ENCODE measurements at regions of chr11 and their contacts with region 1.

Region 1: DNA sequence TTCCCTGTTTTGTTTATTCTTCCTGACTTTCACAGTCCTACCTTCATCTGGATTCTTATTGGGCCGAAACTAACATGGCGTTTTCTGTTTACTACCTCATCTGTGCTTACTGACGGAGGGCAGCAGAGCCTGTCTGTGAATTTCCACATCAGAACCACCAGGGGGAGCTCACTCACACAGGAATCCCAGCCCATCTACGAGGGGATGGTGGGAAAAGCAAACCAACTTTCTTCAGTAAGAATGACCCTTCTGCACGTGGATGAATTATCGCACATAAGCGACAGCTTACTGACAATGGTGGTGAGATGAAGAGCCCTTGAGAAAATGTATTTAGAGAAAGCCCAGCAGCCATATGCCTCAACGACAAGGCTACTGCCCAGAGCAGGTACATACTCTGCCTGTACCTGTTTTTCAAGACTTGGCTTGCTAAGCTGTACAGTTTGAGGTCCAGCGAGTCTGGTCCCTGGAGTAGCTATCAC is 42.5 kb downstream of the LARGE2 start:
- DNase-seq: peak; percentile 73
- ATAC-seq: peak; percentile 95
- H3K4me3 Mint-ChIP-seq: no peak overlapping the region
- H3K27ac Mint-ChIP-seq: no peak overlapping the region
- H3K4me1 Mint-ChIP-seq: no peaks in the 10 kb centered on the region
- H3K27me3 Mint-ChIP-seq: no peaks in the 10 kb centered on the region

Region 2: DNA sequence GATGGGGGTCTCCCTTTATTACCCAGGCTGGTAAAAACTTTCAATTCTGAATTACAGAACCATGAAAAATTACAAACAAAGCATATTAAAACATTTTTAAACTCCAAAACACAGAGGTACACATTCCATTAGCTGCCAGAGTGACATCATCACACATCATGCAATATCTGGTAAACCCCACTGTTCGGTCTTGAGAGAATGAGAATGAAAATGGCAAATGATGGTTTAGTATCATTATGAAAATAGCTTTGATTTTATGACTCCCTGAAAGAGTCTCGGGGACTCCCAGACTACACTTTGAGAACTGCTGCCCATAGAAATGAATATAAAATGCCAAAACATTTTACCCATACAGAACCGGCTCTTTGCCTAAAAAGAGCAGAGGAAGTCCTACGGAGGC is 23.7 kb before region 1 on chr11:
- CTCF ChIA-PET with region 1: interaction called, 14 read pairs
- POLR2A ChIA-PET with region 1: no interaction called
- intact Hi-C with region 1: no loop called
- DNase-seq: no peak
- ATAC-seq: peak; percentile 85
- H3K4me3 Mint-ChIP-seq: no peak overlapping the region
- H3K27ac Mint-ChIP-seq: peak overlapping the region; percentile 63
- H3K4me1 Mint-ChIP-seq: peaks cover 2% of the 10 kb centered on the region
- H3K27me3 Mint-ChIP-seq: no peaks in the 10 kb centered on the region

Region 3: DNA sequence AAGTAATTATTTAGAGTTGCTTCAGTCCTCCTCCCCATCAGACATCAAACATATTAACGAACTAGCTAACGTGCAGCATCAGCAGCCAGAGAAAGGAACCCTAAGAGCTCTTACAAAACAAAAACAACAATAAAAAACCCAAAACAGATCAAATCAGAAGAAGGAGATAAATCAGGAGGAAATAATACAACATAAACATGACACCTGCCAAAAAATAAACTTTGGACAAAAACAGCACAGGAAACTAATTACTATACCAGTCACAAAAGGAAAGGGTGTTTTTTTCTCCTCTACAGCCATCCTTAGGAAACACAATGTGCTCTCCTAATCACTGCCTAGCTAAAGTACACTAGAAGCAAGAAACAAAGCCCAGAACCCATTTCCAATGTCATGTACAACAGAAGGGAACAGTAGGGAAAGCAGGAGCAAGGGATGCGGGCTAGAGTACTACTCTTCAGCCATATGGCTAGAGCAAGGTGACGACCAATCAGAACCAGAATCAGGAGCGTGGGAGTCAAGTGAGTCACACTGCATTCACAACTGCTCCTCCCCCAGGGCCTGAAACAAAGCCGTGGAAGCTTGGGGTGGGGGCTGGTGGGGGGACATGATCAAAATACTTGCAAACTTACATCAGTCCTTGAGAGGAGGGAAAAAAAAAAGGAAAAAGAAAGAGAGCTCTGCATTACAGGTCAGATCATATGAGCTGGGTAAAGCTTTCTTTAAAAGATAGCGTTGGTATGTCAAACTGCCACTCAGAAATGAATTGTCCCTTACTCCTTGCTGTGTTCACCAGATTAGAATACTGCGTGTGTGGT is 17.9 kb after region 1 on chr11:
- CTCF ChIA-PET with region 1: interaction called, 28 read pairs
- POLR2A ChIA-PET with region 1: no interaction called
- intact Hi-C with region 1: no loop called
- DNase-seq: peak; percentile 78
- ATAC-seq: peak; percentile 91
- H3K4me3 Mint-ChIP-seq: peak overlapping the region; percentile 9
- H3K27ac Mint-ChIP-seq: peak overlapping the region; percentile 76
- H3K4me1 Mint-ChIP-seq: peaks cover 30% of the 10 kb centered on the region
- H3K27me3 Mint-ChIP-seq: no peaks in the 10 kb centered on the region

Region 4: GRCh38 chr11:46006418-46007070 is 41.6 kb after region 1 on chr11:
- CTCF ChIA-PET with region 1: interaction called, 115 read pairs
- POLR2A ChIA-PET with region 1: no interaction called
- intact Hi-C with region 1: loop called (anchors 1 kb)
- DNase-seq: peak; percentile 16
- ATAC-seq: peak; percentile 83
- H3K4me3 Mint-ChIP-seq: no peak overlapping the region
- H3K27ac Mint-ChIP-seq: no peak overlapping the region
- H3K4me1 Mint-ChIP-seq: peaks cover 2% of the 10 kb centered on the region
- H3K27me3 Mint-ChIP-seq: no peaks in the 10 kb centered on the region

Region 5: DNA sequence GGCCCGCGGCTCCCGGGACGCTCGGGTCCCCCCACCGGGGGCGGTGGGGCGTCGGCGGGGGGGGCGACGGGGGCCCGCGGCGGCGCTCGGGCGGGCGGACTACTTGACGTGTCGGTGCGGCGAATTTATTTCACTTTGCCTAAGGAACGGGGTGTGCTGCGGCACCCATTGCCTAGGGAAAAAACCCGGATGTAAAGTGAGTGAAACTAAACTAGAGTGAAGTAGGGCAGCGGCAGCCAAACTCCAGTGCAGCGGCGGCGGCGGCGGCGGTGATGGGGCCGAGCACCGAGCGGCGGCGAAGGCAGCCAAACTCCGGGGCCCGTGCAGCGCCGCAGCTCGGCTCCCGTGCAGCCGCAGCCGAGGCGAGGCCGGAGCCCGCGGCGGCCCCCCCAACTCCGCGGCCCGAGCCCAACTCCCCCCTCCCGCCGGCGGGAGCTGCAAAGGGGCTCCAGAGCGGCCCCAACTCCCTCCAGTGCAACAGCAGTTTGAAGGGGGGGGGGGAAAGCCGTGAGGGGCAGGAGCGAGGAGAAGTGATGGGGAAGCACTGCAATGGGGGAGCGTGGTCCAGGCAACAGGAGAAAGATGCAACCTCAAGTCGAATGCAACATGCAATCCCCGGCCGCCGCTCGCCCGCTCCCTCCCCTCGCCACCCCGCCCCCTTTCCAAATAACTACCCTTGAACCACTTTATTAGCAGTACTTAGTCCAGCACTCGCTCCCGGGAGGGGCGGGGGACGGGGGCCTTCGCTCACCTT is 157.0 kb after region 1 on chr11:
- CTCF ChIA-PET with region 1: interaction called, 4 read pairs
- POLR2A ChIA-PET with region 1: no interaction called
- intact Hi-C with region 1: loop called in 1 of 2 experiments (anchors 2 kb)
- DNase-seq: peak; percentile 83
- ATAC-seq: peak; percentile 39
- H3K4me3 Mint-ChIP-seq: peak overlapping the region; percentile 81
- H3K27ac Mint-ChIP-seq: peak overlapping the region; percentile 86
- H3K4me1 Mint-ChIP-seq: peaks cover 41% of the 10 kb centered on the region
- H3K27me3 Mint-ChIP-seq: no peaks in the 10 kb centered on the region

Region 6: GRCh38 chr11:46336781-46337180 is 371.8 kb after region 1 on chr11:
- CTCF ChIA-PET with region 1: no interaction called
- POLR2A ChIA-PET with region 1: no interaction called
- intact Hi-C with region 1: no loop called
- DNase-seq: peak; percentile 51
- ATAC-seq: no peak
- H3K4me3 Mint-ChIP-seq: no peak overlapping the region
- H3K27ac Mint-ChIP-seq: no peak overlapping the region
- H3K4me1 Mint-ChIP-seq: peaks cover 67% of the 10 kb centered on the region
- H3K27me3 Mint-ChIP-seq: no peaks in the 10 kb centered on the region

Measured in activated CD4-positive, alpha-beta T cell treated with anti-CD3 and anti-CD28 coated beads for 36 hours (primary cell).